PC-9 (cell line): ENCODE measurements at regions of chr12 and their contacts with region 1.

Region 1: DNA sequence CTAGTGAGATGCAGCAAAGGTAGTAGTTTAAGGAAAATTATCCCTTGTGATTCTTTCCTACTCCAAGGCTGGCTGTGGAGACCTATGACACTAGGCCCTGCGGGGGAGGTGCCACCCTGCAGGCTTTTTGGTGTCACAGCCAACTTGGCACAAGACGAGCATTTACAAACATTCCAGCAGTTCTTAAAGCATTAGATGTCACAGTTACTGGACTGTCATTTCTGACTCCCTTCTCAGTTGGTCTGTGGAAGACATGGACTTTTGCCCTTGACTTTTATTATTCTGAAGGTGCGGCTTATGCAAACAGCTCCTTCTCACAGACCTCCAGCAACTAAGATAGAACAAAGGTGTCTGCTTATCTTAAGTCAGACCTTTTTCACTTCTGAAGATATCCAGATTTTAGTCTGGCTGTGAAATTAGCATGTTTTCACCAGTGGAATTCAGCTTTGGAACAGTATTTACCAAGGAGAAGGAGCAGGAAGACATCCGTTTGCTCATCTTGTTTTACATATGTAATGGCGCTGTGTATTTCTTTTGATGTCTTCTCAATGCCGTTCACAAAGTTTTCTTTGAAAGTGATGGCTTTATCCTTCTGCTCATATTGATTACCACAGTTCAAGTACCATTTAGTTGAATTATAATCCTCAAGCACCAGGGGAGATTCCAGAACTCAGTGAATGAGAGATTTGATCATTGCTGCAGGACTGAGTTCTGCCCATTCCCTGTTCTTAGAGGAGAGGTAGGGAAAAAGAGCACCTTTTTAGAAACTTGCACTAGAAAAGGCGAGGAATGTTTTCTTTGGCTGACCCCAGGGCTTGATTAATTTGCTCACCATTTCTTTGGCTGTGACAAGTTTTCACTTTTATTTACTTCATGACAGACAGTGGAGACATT is 18.0 kb downstream of the SRGAP1 start:
- DNase-seq: peak; percentile 78 to 96
- H3K4me3 ChIP-seq: peak overlapping the region; percentile 23; the same call in 1 of the 2 replicates
- H3K27ac ChIP-seq: peak overlapping the region; percentile 76
- H3K4me1 ChIP-seq: peaks cover 64% of the 10 kb centered on the region
- H3K27me3 ChIP-seq: no peaks in the 10 kb centered on the region
- CTCF ChIP-seq: no peak

Region 2: DNA sequence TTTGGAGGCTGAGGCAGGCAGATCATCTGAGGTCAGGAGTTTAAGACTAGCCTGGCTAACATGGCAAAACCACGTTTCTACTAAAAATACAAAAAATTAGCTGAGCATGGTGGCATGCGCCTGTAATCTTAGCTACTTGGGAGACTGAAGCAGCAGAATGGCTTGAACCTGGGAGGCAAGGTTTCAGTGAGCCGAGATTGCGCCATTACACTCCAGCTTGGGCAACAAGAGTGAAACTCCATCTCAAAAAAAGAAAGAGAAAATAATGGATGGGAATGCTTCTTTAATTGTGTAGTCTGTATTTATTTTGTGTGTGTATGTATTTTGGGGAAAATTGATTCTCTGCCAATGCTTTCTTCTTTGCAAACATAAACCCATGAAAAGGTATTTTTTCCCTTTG is 14.5 kb after region 1 on chr12:
- CTCF ChIA-PET with region 1: no interaction called
- POLR2A ChIA-PET with region 1: interaction called, 6 read pairs
- intact Hi-C with region 1: loop called (anchors 2 kb)
- DNase-seq: no peak
- H3K4me3 ChIP-seq: no peak overlapping the region
- H3K27ac ChIP-seq: peak overlapping the region; percentile 76
- H3K4me1 ChIP-seq: peaks cover 39% of the 10 kb centered on the region
- H3K27me3 ChIP-seq: no peaks in the 10 kb centered on the region
- CTCF ChIP-seq: no peak

Region 3: DNA sequence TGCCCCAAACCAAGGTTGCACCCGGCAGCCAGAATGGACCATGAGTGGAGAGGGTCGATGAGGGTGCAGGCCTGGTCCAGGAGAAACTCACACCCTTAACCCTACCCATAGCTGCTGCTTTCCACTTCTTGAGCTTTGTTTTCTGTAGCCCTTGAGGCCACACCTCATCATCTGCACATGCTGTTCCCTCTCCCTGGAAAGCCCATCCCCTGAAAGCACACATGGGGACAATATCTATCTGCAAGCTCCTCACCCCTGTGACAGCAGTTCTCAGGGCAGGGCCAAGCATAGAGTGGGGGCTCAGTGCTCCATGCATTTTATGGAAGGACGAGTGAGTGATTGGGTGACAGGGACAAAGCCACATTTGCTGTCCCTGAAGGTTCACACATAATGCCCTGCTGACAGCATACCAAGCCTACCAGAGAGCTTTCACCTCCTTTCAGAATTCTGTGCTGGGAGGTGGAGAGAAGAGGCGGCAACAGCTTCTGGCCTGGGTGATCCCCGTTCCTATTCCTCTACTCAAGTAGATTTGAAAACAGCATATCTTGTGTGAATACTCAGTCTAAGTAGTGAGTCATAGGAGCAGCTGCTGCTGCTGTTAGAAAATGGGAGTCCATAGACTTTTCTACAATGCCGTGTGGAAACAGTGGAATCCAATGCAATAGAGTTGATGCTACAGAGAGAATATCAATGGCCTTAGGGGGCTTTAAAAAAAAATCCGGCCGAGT is 26.6 kb after region 1 on chr12:
- CTCF ChIA-PET with region 1: no interaction called
- POLR2A ChIA-PET with region 1: interaction called, 13 read pairs
- intact Hi-C with region 1: no loop called
- DNase-seq: no peak
- H3K4me3 ChIP-seq: no peak overlapping the region
- H3K27ac ChIP-seq: no peak overlapping the region
- H3K4me1 ChIP-seq: no peaks in the 10 kb centered on the region
- H3K27me3 ChIP-seq: no peaks in the 10 kb centered on the region
- CTCF ChIP-seq: no peak

Region 4: DNA sequence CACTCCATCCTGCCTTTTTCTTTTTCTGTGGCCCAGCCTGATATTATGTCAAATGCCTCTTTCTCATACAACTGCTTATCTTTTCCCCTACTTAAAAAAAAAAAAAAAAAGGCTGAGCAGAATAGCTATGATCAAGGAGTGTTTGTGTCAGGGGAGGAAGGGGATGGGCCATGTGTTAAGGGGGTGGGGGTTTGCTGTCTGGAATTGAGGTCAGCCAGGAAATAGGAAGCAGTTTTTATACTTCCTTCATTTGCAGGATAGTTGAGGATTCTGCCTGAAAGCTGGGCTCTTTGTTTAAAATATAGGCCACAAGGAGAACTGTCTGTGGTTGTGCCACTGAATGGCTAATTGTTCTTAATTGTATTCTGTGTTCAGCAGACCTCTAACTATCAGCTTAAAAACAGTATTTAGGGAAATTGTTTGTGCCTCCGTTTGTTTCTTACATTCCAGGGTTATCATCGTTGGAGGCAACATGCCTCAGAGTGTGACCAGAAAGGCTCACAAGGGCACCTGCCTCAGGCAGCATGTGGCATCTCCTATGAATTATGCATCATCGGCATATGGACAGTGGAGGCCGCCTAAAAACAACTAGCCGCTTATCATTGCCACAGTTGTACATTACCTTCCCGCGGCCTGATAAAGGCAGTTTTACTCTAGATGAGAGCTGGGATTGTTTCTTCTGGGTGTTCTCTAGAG is 78.0 kb after region 1 on chr12:
- CTCF ChIA-PET with region 1: no interaction called
- POLR2A ChIA-PET with region 1: no interaction called
- intact Hi-C with region 1: no loop called
- DNase-seq: no peak
- H3K4me3 ChIP-seq: no peak overlapping the region
- H3K27ac ChIP-seq: no peak overlapping the region
- H3K4me1 ChIP-seq: no peaks in the 10 kb centered on the region
- H3K27me3 ChIP-seq: no peaks in the 10 kb centered on the region
- CTCF ChIP-seq: no peak